ENCODE measurements at regions of chr20 and their contacts with region 1.

Region 1: GRCh38 chr20:45987108-45987780 is 15.2 kb upstream of the ZNF335 start:
- DNase-seq: peak; percentile 85
- H3K4me3 Mint-ChIP-seq: no peak overlapping the region
- H3K27ac Mint-ChIP-seq: no peak overlapping the region
- H3K4me1 Mint-ChIP-seq: peaks cover 3% of the 10 kb centered on the region
- H3K27me3 Mint-ChIP-seq: no peaks in the 10 kb centered on the region

Region 2: DNA sequence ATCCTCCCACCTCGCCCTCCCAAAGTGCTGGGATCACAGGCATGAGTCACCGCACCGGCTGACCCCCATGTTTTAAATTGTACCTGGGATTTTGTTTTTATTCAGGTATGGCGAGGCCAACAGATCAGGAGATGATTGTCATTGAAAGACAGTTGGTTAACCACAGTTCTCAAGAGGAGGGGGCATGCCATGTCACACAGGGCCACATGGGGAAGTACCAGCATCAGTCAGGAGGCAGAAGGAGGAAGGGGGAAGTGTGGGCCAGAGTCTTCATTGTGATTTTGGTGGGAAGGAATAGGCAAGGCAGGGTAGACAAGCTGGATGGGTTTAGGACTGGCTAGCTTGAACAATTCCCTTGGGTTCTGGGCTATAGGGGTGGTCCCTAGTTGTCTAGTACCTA is 11.5 kb after region 1 on chr20:
- CTCF ChIA-PET with region 1: interaction called, 36 read pairs
- POLR2A ChIA-PET with region 1: no interaction called
- intact Hi-C with region 1: no loop called
- DNase-seq: peak; percentile 63
- H3K4me3 Mint-ChIP-seq: no peak overlapping the region
- H3K27ac Mint-ChIP-seq: no peak overlapping the region
- H3K4me1 Mint-ChIP-seq: peaks cover 59% of the 10 kb centered on the region
- H3K27me3 Mint-ChIP-seq: no peaks in the 10 kb centered on the region

Region 3: DNA sequence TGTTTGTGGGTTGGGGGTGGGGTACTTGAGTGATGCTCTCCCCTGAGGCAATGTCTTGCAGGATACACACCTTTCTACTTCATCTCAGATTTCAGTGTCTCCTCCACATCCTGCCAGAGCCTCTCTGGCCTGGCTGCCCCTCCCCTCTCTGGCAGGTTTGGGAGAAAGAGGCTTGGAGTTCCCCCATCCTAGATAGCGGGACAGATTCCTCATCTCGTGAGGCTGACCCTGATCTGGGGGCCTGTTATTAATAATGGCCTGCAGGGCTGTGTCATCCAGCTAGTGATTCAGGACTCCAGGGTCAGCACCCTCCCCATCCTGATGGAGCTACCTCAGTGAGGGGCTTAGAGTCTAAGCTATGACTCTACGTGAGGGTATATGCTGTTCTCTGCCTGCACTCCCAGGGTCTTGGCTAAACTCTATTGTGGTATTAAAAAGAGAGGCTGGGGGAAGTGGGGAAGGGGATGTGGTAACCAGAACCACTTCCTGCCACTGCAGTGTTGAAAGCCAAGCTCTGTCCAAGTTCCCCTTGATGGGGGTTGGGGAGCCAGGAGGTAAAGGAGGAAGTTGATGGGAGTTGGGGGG is 17.7 kb after region 1 on chr20:
- CTCF ChIA-PET with region 1: interaction called, 36 read pairs
- POLR2A ChIA-PET with region 1: no interaction called
- intact Hi-C with region 1: no loop called
- DNase-seq: peak; percentile 50
- H3K4me3 Mint-ChIP-seq: peak overlapping the region; percentile 28
- H3K27ac Mint-ChIP-seq: peak overlapping the region; percentile 25
- H3K4me1 Mint-ChIP-seq: peaks cover 70% of the 10 kb centered on the region
- H3K27me3 Mint-ChIP-seq: peaks cover 13% of the 10 kb centered on the region

Measured in activated CD4-positive, alpha-beta memory T cell treated with anti-CD3 and anti-CD28 coated beads for 36 hours (primary cell).